Heart left ventricle (tissue), 16 donors: ENCODE measurements at regions of chr12 and their contacts with region 1.

Region 1: GRCh38 chr12:132761032-132761920 is at the start of gene ANKLE2:
- DNase-seq: peak; percentile 49 to 76 (median 62)
- ATAC-seq: peak in 3 of 4 donors; percentile 36 to 41 (median 38)
- H3K4me3 ChIP-seq: peak within 1 kb of the TSS; percentile 77 to 99 (median 94)
- H3K27ac ChIP-seq: peak within 1 kb of the TSS; percentile 84 to 99 (median 96)
- H3K4me1 ChIP-seq: peaks cover under 1 to 35% (median 24%) of the 10 kb centered on the region in 12 donors
- H3K27me3 ChIP-seq: no peaks in the 10 kb centered on the region
- CTCF ChIP-seq: no peak
- POLR2A ChIP-seq: no peak
- total RNA-seq, gene ANKLE2: 20.7 to 45.2 (median 29.1) TPM

Region 2: DNA sequence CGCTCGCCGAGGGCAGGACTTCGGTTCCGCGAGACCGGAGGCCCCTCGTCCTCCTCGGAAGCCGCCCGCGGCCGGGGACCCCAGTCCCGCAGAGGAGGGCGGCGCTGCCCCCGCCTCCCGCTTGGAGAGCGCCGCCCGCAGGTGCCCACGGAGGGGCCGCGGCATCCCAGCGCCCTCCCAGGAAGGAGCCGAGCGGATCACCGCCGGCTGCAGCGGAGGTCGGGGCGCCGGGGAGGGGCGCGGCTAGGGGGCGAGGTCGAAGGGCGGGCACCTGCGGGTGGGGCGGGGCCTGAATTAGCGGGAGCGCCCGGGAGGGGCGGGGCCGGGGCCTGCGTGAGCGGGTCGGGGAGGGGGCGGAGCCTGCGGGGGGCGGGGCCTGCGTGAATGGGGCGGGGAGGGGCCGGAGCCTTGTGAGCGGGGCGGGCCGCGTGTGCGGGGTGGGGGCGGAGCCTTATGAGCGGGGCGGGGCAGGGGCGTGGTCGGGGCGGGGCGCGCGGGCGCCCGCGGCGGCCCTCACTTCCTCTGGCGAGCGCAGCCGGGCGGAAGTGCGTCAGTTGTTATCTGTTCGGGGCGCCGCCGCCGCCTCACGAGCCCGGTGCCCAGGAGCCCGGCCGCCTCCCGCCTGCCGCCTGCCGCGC is 271.6 kb before region 1 on chr12 and contains the start of gene FBRSL1:
- intact Hi-C with region 1: no loop called
- DNase-seq: peak; percentile 91 to 96 (median 92)
- ATAC-seq: peak; percentile 62 to 87 (median 84)
- H3K4me3 ChIP-seq: peak within 1 kb of the TSS; percentile 63 to 97 (median 81)
- H3K27ac ChIP-seq: peak within 1 kb of the TSS; percentile 66 to 95 (median 90)
- H3K4me1 ChIP-seq: peaks cover 4 to 57% (median 49%) of the 10 kb centered on the region in 12 donors
- H3K27me3 ChIP-seq: no peaks in the 10 kb centered on the region
- CTCF ChIP-seq: peak in 2 of 12 donors; percentile 12 to 14
- POLR2A ChIP-seq: no peak
- total RNA-seq, gene FBRSL1: 23.0 to 88.2 (median 45.4) TPM

Region 3: DNA sequence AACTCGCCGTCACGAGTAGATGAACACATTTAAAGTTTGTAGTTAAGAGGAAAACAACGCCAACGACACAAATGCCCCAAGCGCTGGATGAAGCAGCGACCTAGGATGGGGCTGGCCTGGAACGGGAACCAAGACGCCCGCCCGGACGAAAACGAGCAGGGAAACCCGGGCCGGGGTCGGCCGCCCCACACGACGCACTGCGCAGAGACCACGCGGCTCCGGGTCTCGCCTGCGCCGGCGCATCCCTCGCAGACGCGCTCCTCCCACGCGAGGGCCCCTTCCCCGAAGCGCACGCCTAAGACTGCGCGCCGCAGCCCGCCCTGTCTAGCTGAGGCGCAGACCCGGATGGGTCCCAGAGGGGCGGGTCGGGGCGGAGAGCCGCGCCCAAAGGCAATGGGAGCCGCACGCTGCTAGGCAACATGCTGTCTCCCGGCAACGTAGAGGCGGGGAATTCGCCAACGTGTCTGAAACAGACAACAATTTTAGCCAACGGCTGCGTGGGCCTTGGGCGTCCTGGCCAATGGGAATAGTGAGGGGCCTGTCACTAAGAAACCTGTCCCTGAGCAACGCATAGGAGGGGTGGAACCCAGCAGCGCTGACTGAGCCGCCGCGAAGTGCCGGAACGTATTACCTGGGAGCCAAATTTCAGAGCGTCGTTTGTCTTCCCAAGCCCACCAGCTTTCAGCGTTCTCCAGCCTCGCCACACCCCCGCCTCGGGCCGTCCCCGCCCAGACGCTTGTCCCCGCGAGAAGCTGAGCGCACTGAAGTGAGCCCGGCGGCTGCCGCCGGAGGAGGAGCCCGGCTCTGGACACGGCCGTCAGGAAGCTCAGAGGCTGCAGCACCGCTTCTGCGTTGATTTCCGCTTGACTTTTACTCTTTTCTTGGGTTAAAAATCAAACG is 147.1 kb after region 1 on chr12:
- intact Hi-C with region 1: loop called in 1 of 10 experiments (anchors 10 kb)
- DNase-seq: peak; percentile 97 to 98 (median 98)
- ATAC-seq: peak; percentile 96 to 98 (median 98)
- H3K4me3 ChIP-seq: peak overlapping the region; percentile 18 to 83 (median 64)
- H3K27ac ChIP-seq: peak overlapping the region; percentile 47 to 85 (median 72)
- H3K4me1 ChIP-seq: peaks cover 0 to 24% (median 8%) of the 10 kb centered on the region in 12 donors
- H3K27me3 ChIP-seq: peaks cover 0 to 27% (median 5%) of the 10 kb centered on the region in 9 donors
- CTCF ChIP-seq: no peak
- POLR2A ChIP-seq: peak in 1 of 2 donors; percentile 39